A673 (cell line): ENCODE measurements at regions of chr15 and their contacts with region 1.

Region 1: DNA sequence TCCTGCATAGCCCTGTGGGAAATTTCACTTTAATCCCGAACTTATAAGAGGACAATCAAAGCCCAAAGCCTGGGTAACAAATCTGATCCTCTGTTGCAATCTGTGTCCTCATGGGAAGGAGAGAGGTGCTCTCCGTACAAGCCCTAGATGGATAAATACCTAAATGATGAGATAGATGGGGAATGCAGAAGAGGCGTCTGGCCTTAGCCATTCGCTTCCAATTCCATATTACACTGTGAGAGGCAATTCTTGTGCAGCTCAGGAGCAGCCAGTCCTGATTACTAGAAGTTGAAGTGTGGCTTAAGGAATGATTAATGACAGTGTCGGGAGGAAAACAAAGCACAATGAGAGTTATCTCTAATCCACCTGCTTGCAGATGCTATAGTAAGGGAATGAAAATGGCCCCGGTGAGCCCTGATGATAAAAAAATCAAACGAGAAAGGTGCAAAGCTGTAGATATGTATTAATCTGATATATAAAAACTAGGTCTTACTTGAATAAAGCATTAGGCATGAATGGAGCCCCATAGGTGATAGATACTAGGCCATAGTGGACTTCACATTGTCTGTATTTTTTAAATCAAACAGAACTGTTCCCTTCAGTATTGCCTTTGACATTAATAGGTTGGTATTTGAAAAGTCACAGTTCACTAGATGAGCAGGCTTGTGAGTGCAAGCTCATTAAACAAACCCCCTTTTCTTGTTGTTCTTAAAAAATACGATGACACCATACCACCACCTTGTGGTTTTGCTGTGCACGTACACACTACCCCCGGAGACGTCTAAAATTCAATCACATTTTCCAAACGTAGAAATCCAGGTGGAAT is 54.2 kb upstream of the TMCO5A start:
- DNase-seq: peak; percentile 74
- H3K4me3 ChIP-seq: no peak overlapping the region
- H3K27ac ChIP-seq: peak overlapping the region; percentile 33
- H3K4me1 ChIP-seq: peaks cover 31% of the 10 kb centered on the region
- H3K27me3 ChIP-seq: no peaks in the 10 kb centered on the region
- CTCF ChIP-seq: peak; percentile 89

Region 2: DNA sequence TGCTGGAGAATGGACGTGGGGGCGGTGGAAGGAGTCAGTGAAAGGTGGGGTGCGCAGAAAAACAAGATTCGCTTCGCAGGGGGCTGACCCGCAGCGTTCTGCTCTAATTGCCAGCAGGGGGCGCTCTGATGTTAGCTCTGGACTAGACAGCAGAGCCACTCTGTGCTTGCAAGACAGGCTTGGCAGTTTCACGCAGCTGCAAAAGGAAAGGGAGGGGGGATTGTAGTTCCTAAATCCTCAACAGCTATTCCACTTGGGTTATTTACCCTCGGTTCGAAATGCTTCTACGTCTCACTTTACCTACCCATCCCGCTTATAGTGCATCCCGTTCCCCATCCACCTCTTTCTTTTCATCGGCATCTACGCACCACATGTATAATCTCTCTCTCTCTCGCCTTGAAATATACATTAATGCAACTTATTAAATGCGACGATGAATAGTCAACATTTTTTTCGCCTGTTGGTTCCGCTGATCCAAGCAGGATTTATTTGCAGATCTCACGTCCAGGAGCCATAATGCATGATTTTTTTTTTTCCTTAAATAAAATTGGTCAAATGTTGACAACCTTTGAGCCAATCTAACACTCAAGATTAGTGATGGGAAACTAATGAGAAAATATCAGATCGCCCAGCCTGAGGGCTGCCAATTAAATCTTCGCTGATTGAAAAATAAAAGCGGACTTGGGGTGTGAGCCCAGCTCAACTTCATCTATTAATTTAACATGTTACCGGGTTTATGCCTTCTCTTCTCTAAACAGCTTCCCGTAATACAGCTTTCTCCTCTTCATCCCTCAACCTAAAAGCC is 996.3 kb before region 1 on chr15:
- CTCF ChIA-PET with region 1: no interaction called
- POLR2A ChIA-PET with region 1: no interaction called
- intact Hi-C with region 1: loop called (anchors 5 kb)
- DNase-seq: peak; percentile 90
- H3K4me3 ChIP-seq: no peak overlapping the region
- H3K27ac ChIP-seq: no peak overlapping the region
- H3K4me1 ChIP-seq: peaks cover 13% of the 10 kb centered on the region
- H3K27me3 ChIP-seq: peaks cover 57% of the 10 kb centered on the region
- CTCF ChIP-seq: peak; percentile 93

Region 3: GRCh38 chr15:37291920-37292319 is 588.3 kb before region 1 on chr15:
- CTCF ChIA-PET with region 1: no interaction called
- POLR2A ChIA-PET with region 1: no interaction called
- intact Hi-C with region 1: loop called (anchors 10 kb)
- DNase-seq: no peak
- H3K4me3 ChIP-seq: no peak overlapping the region
- H3K27ac ChIP-seq: no peak overlapping the region
- H3K4me1 ChIP-seq: no peaks in the 10 kb centered on the region
- H3K27me3 ChIP-seq: no peaks in the 10 kb centered on the region
- CTCF ChIP-seq: no peak

Region 4: DNA sequence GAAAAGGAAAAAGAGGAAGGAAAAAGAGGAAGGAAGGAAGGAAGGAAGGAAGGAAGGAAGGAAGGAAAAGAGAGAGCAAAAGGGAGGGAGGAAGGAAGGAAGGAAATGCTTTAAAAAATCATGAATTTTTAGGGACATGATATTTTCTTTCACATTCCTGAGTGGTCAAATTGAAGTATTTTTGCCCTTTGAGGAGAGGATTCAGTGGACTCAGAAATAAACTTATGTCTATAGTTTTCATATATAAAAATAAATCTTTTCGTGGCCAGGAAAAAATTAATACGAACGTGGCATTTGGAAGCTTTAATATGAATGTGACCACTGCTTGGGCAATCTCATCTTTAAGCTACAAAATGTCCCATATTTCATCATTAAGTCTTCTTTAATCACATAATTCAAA is 128.8 kb before region 1 on chr15:
- CTCF ChIA-PET with region 1: interaction called, 3 read pairs
- POLR2A ChIA-PET with region 1: no interaction called
- intact Hi-C with region 1: loop called (anchors 5 kb)
- DNase-seq: peak; percentile 67
- H3K4me3 ChIP-seq: no peak overlapping the region
- H3K27ac ChIP-seq: peak overlapping the region; percentile 87
- H3K4me1 ChIP-seq: peaks cover 9% of the 10 kb centered on the region
- H3K27me3 ChIP-seq: no peaks in the 10 kb centered on the region
- CTCF ChIP-seq: no peak

Region 5: GRCh38 chr15:37891766-37892368 is 11.6 kb after region 1 on chr15:
- CTCF ChIA-PET with region 1: interaction called, 10 read pairs
- POLR2A ChIA-PET with region 1: no interaction called
- intact Hi-C with region 1: no loop called
- DNase-seq: peak; percentile 68
- H3K4me3 ChIP-seq: no peak overlapping the region
- H3K27ac ChIP-seq: no peak overlapping the region
- H3K4me1 ChIP-seq: no peaks in the 10 kb centered on the region
- H3K27me3 ChIP-seq: no peaks in the 10 kb centered on the region
- CTCF ChIP-seq: peak; percentile 89

Region 6: DNA sequence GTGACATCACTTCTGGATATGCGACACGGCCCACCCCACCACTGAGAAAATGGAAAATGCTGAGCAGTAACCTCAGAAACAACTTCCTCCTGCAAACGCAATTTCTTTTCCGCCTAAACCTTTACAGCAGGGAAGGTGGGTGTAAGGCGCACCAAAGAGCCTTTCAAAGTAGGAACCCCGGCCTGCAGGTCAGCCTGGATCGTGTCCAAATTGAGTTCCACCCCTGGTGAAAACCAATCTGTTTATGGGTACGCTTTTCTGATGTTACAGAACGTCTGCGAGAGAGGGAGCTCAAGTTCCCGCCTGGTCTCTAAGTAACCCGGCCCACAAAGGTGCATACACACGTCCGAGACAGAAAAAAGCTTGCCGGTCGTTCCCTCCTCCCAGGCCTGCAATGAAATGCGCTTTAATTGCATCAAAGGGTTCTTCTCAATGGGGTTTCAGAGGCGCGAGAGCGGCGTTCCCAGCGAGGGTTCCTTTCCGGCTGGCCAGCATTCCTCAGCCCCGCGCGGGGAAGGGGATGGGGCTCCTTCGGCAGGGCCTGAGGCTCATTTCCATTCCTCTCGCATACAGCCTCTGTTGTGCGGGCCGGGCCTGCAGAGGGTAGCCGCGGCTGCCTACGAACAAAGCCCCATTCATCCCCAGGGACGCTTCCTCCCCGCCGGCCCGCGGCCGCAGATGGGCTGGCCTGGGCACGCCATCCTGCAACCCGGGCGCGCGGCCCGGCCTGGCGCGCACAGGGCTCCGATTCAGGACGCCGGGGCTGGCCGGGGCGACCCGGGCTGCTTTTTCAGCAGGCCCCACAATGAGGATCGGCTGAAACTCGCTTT is 192.3 kb after region 1 on chr15:
- CTCF ChIA-PET with region 1: no interaction called
- POLR2A ChIA-PET with region 1: no interaction called
- intact Hi-C with region 1: no loop called
- DNase-seq: peak; percentile 69
- H3K4me3 ChIP-seq: peak overlapping the region; percentile 44
- H3K27ac ChIP-seq: no peak overlapping the region
- H3K4me1 ChIP-seq: peaks cover 24% of the 10 kb centered on the region
- H3K27me3 ChIP-seq: no peaks in the 10 kb centered on the region
- CTCF ChIP-seq: peak; percentile 34